Activated CD4-positive, alpha-beta T cell treated with anti-CD3 and anti-CD28 coated beads, Interleukin-2, amount 10 ng/mL, durations not matched to agents 24 days and 14 days (primary cell): ENCODE measurements at regions of chr2 and their contacts with region 1.

Region 1: GRCh38 chr2:136327162-136327852 is 209.4 kb upstream of the CXCR4 start:
- DNase-seq: peak; percentile 91
- H3K4me3 Mint-ChIP-seq: peak overlapping the region; percentile 74
- H3K27ac Mint-ChIP-seq: peak overlapping the region; percentile 92
- H3K4me1 Mint-ChIP-seq: peaks cover 49% of the 10 kb centered on the region
- H3K27me3 Mint-ChIP-seq: no peaks in the 10 kb centered on the region

Region 2: DNA sequence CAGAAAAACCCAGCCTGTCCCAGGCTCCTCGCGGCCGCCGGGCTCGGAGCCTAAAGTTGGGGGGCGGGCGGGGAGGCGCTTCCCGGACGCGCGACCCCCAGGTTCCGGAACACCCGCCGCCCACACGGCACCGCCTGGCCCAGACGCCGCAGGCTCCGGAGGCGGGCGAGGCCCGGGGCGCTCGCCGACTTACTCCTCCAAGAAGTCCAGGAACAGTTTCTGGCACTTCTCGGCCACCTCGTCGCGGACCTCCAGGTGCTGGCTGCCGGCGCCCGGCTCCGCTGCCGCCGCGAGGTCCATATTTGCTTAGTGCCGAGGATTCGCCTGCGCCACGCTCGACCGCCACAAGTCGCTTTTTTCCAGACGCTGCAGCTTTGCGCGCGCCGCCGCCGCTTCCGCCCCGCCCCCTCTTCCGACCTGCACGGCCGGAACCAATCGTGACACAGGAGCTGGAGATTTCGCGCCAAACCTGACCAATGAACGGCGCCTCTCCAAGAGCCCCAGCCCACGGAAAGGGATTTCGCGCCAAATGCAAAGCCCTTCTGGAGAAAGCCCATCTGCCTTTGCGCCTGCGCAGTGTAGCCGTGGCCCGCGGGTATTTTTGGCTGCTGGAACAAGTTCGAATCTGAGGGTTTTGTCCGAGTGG is 451.1 kb before region 1 on chr2 and contains the start of gene MCM6:
- intact Hi-C with region 1: loop called (anchors 2 kb)
- DNase-seq: peak; percentile 100
- H3K4me3 Mint-ChIP-seq: peak within 1 kb of the TSS; percentile 83
- H3K27ac Mint-ChIP-seq: peak within 1 kb of the TSS; percentile 97
- H3K4me1 Mint-ChIP-seq: peaks cover 31% of the 10 kb centered on the region
- H3K27me3 Mint-ChIP-seq: peaks cover 2% of the 10 kb centered on the region
- total RNA-seq, gene MCM6: 196 and 197 TPM in 2 replicates

Region 3: DNA sequence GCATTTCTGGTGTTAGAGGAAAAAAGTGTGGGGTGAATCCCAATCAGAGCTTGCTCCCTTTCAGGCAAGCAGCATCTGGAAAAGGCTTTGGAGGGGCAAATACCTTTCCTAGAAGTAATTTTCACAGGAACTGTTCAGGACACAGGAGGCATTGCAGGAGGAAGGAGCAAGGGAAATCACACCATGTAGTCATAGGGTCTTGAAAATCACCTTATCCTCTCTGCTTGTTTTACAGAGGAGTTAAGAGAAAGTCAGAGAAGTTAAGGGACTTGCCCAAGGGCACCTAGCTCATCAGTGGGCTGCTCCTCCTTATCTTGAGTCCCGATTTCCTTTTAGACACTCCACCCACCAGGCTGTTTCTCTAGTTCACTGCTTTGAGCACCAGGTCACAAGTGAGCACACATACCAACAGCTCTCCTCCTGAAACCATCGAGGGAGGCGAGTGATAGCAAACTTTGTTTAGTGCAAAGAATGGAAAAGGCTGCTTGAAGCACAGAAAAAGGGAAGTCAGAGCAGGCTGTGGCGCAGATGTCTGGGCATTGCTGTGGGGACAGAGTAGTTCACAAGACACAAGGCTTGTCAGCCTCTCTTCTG is 120.2 kb before region 1 on chr2:
- intact Hi-C with region 1: loop called (anchors 2 kb)
- DNase-seq: peak; percentile 60
- H3K4me3 Mint-ChIP-seq: peak overlapping the region; percentile 8
- H3K27ac Mint-ChIP-seq: peak overlapping the region; percentile 92
- H3K4me1 Mint-ChIP-seq: peaks cover 23% of the 10 kb centered on the region
- H3K27me3 Mint-ChIP-seq: peaks cover 4% of the 10 kb centered on the region

Region 4: GRCh38 chr2:136281281-136282114 is 45.8 kb before region 1 on chr2:
- intact Hi-C with region 1: loop called (anchors 2 kb)
- DNase-seq: peak; percentile 83
- H3K4me3 Mint-ChIP-seq: peak overlapping the region; percentile 1
- H3K27ac Mint-ChIP-seq: peak overlapping the region; percentile 79
- H3K4me1 Mint-ChIP-seq: peaks cover 43% of the 10 kb centered on the region
- H3K27me3 Mint-ChIP-seq: no peaks in the 10 kb centered on the region

Region 5: DNA sequence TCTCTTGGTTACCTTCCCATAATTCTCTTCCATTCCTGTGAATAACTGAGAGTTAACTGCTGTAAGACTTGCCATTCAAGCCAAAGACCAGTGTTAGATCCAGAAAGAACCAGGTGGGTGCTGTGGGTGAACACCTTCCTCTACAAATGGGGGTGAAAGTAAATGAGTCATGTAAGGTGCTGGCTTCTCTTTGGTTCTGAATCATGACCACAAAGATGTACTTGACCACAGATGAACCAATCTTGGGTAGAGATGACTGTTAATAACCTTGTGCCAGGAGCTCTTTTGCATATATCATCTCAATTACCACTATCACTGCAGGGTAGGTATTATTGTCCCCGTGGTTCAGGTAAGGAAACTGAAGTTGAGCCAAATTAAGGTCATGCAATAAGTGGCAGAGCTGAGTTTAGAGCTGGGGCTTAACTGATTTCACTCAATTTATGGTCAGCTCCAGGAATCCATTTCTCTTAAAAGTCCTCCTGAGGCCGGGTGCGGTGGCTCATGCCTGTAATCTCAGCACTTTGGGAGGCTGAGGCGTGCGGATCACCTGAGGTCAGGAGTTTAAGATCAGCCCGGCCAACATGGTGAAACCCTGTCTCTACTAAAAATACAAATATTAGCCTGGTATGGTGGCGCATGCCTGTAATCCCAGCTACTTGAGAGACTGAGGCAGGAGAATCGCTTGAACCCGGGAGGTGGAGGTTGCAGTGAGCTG is 35.5 kb after region 1 on chr2:
- intact Hi-C with region 1: loop called (anchors 1 kb)
- DNase-seq: peak; percentile 75
- H3K4me3 Mint-ChIP-seq: peak overlapping the region; percentile 34
- H3K27ac Mint-ChIP-seq: peak overlapping the region; percentile 57
- H3K4me1 Mint-ChIP-seq: peaks cover 40% of the 10 kb centered on the region
- H3K27me3 Mint-ChIP-seq: no peaks in the 10 kb centered on the region